Cardiac septum (tissue), 1 donor: ENCODE measurements at regions of chr21 and their contacts with region 1.

Region 1: GRCh38 chr21:28111151-28111619 is 881.5 kb downstream of the LTN1 start:
- DNase-seq: peak; percentile 76

Region 2: DNA sequence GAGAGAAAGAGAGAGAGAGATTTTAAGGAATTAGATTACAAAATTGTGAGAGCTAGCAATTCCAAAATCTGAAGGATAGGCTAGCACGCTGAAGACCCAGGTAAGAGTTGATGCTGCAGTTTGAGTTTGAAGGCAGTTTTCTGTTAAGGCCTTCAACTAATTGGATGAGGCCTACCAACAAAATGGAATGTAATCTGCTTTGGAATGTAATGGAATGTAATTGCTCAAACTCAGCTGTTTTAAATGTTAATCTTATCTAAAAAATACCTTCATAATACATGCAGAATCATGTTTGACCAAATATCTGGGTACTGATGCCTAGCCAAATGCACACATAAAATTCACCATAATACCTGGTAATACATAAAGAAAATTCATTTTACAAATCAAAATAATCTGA is 94.6 kb before region 1 on chr21:
- intact Hi-C with region 1: no loop called
- DNase-seq: no peak

Region 3: GRCh38 chr21:28069450-28069923 is 41.7 kb before region 1 on chr21:
- intact Hi-C with region 1: loop called (anchors 10 kb)
- DNase-seq: no peak

Region 4: GRCh38 chr21:28215214-28215954 is 104.2 kb after region 1 on chr21:
- intact Hi-C with region 1: loop called (anchors 10 kb)
- DNase-seq: no peak

Region 5: GRCh38 chr21:28473530-28474220 is 362.5 kb after region 1 on chr21:
- intact Hi-C with region 1: no loop called
- DNase-seq: no peak

Region 6: DNA sequence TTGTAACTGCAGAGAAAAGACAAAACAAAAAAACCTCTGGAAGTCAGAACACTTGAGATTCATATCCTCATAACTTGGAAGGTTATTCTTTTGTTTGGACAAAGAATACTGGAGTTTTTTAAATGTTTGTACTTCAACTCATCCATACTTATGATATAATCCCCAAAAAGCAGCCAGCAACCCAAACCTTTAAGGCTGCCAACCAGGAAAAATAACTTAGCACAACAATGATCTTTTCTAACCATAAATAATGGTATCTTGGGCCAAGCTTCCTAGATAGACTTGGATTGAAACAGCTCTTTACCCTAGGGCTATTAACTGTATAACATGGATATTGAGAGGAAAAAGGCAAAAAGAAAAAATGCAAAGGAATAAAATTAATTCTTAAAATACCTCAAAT is 546.4 kb after region 1 on chr21:
- intact Hi-C with region 1: no loop called
- DNase-seq: no peak